ENCODE measurements at regions of chr9 and their contacts with region 1.

Region 1: DNA sequence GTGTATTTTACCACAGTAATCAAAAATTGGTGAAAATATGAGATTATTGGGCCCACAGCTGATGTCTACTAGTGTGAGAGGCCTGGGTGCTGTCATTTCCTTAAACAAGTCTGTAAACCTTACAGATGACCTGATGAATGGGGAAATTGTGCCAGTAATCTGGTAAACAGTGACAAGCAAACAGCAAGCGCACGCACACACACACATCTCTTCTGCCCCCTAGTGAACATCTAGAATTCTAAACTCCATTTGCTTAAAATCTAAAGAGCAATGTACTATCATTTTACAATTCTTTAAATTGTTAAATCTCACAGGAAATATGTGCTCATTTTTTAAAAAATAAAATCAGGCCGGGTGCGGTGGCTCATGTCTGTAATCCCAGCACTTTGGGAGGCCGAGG is 7.5 kb upstream of the RAPGEF1 start:
- DNase-seq: peak; percentile 17
- H3K4me3 Mint-ChIP-seq: no peak overlapping the region
- H3K27ac Mint-ChIP-seq: no peak overlapping the region
- H3K4me1 Mint-ChIP-seq: peaks cover 17% of the 10 kb centered on the region
- H3K27me3 Mint-ChIP-seq: peaks cover 13% of the 10 kb centered on the region
- CTCF ChIP-seq: no peak

Region 2: GRCh38 chr9:131324736-131325679 is 422.3 kb before region 1 on chr9:
- CTCF ChIA-PET with region 1: no interaction called
- intact Hi-C with region 1: no loop called
- DNase-seq: no peak
- H3K4me3 Mint-ChIP-seq: no peak overlapping the region
- H3K27ac Mint-ChIP-seq: no peak overlapping the region
- H3K4me1 Mint-ChIP-seq: no peaks in the 10 kb centered on the region
- H3K27me3 Mint-ChIP-seq: peaks cover 30% of the 10 kb centered on the region
- CTCF ChIP-seq: no peak

Region 3: GRCh38 chr9:131590908-131591844 is 156.2 kb before region 1 on chr9:
- CTCF ChIA-PET with region 1: interaction called, 6 read pairs
- intact Hi-C with region 1: loop called (anchors 1 kb)
- DNase-seq: peak; percentile 76
- H3K4me3 Mint-ChIP-seq: no peak overlapping the region
- H3K27ac Mint-ChIP-seq: no peak overlapping the region
- H3K4me1 Mint-ChIP-seq: no peaks in the 10 kb centered on the region
- H3K27me3 Mint-ChIP-seq: no peaks in the 10 kb centered on the region
- CTCF ChIP-seq: peak; percentile 66